Caco-2 (cell line): ENCODE measurements at regions of chr6 and their contacts with region 1.

Region 1: DNA sequence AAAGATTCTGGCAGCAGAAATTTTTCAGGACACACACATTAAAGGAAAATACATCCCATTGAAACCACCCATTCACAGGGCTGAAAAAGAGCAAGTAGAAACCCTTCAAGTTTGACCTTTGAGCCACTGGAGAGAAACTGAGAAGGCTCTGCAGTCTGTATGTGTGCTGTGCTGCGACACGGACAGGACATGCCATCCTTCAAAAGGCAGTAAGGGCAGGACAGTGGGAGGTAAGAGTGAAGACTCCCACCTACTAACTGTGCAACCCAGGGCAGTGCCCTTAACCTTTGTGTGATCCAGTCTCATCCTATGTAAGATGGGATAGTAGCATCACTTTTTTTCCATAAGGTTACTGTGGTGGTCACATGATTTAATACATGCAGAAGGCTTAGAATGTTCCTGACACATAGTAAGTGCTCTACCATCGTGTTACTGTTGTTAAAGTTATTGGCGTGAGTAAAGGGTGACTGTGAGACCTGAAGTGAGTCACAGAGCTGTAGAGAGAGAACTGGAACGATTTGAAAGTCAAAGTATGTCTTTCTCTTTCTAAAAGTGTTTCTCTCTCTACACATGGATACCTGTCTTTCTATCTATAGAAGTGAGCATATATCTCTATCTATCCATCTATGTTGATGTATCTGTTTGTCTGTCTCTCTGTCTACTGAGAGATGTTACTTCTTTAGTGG is 153.7 kb upstream of the OLIG3 start:
- DNase-seq: no peak
- H3K4me3 ChIP-seq: no peak overlapping the region
- H3K4me3 Mint-ChIP-seq: peak overlapping the region; percentile 66
- H3K27ac Mint-ChIP-seq: peak overlapping the region; percentile 90
- H3K4me1 ChIP-seq: peaks cover 36% of the 10 kb centered on the region
- H3K4me1 Mint-ChIP-seq: peaks cover 35% of the 10 kb centered on the region
- H3K27me3 ChIP-seq: no peaks in the 10 kb centered on the region
- H3K27me3 Mint-ChIP-seq: no peaks in the 10 kb centered on the region
- CTCF ChIP-seq: no peak

Region 2: GRCh38 chr6:137661601-137662000 is 13.7 kb after region 1 on chr6:
- CTCF ChIA-PET with region 1: interaction called, 16 read pairs
- POLR2A ChIA-PET with region 1: interaction called, 5 read pairs
- intact Hi-C with region 1: loop called (anchors 1 kb)
- DNase-seq: peak; percentile 42 to 44
- H3K4me3 ChIP-seq: no peak overlapping the region
- H3K4me3 Mint-ChIP-seq: no peak overlapping the region
- H3K27ac Mint-ChIP-seq: no peak overlapping the region
- H3K4me1 ChIP-seq: peaks cover 52% of the 10 kb centered on the region
- H3K4me1 Mint-ChIP-seq: peaks cover 17% of the 10 kb centered on the region
- H3K27me3 ChIP-seq: no peaks in the 10 kb centered on the region
- H3K27me3 Mint-ChIP-seq: no peaks in the 10 kb centered on the region
- CTCF ChIP-seq: peak; percentile 15 to 27